ENCODE measurements at regions of chr16 and their contacts with region 1.

Region 1: DNA sequence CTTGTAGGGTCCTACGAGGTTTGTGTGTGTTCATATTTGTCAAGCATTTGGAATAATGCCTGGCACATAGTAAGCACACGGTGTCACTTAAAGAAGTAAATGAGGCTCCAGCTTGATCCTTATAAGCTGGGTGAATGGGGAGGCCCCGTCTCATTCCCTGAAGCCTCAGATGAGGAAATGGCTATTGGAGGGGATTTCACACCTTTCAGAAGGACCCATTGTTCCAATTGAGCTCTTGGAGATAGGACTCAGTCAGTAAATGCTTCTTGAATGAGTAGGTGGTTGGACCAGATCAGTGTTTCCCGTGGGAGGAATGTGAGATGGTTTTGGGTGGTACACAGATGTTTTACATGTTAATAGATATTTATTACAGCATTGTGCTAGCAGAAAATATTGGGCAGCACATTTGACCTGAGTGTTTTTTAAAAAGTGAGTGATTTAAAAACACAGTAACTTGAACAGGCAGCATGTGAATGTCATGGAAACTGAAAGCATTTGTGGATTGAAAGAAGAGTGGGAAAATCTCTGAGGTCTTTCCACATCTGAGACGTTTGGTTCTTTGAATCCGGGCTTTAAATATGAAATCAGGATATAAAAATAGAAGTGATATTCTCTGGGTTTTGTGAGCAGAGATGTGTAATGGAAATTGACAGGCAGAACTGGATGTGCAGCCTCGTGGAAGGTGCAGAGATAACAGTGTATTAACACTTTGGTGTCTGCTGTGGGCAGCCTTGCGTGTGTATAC is 36.4 kb upstream of the ARHGAP17 start:
- DNase-seq: no peak
- H3K4me3 ChIP-seq: no peak overlapping the region
- H3K27ac ChIP-seq: no peak overlapping the region
- H3K4me1 ChIP-seq: peaks cover 50% of the 10 kb centered on the region
- CTCF ChIP-seq: no peak

Region 2: DNA sequence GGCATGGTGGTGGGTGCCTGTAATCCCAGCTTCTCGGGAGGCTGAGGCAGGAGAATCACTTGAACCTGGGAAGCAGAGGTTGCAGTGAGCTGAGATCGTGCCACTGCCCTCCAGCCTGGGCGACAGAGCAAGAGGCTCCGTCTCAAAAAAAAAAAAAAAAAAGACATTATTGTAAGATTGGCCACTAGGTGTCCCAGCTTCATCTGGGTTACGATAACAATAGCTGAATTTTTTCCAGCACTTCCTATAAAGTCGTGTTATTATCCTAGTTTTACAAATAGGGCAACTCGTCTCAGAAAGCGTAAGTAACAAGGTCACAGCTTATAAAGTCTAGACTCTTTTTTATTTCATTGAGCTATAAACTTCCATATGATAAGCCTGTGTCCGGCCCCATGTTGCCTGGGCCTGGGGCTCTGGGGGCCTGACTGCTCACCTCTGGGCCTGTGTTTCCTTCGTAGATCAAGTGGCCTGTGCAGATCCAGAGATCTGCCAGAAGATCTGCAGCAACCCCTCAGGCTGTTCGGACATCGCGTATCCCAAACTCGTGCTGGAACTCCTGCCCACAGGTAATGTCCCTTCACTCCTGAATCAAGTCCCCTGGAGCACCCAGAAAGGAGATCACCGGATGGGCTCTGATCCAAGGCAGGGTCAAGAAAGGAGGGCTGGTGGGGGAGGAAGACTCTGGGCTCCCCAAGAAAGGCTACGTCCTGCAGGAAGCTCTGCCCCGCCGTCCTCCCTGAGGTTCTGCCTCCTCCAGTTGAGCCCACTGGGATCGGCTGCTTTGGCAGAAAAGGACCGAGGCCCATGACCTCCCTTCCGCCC is 145.2 kb before region 1 on chr16:
- CTCF ChIA-PET with region 1: no interaction called
- POLR2A ChIA-PET with region 1: no interaction called
- intact Hi-C with region 1: loop called (anchors 10 kb)
- DNase-seq: peak; percentile 41
- H3K4me3 ChIP-seq: no peak overlapping the region
- H3K27ac ChIP-seq: no peak overlapping the region
- H3K4me1 ChIP-seq: no peaks in the 10 kb centered on the region
- CTCF ChIP-seq: peak; percentile 77

Region 3: DNA sequence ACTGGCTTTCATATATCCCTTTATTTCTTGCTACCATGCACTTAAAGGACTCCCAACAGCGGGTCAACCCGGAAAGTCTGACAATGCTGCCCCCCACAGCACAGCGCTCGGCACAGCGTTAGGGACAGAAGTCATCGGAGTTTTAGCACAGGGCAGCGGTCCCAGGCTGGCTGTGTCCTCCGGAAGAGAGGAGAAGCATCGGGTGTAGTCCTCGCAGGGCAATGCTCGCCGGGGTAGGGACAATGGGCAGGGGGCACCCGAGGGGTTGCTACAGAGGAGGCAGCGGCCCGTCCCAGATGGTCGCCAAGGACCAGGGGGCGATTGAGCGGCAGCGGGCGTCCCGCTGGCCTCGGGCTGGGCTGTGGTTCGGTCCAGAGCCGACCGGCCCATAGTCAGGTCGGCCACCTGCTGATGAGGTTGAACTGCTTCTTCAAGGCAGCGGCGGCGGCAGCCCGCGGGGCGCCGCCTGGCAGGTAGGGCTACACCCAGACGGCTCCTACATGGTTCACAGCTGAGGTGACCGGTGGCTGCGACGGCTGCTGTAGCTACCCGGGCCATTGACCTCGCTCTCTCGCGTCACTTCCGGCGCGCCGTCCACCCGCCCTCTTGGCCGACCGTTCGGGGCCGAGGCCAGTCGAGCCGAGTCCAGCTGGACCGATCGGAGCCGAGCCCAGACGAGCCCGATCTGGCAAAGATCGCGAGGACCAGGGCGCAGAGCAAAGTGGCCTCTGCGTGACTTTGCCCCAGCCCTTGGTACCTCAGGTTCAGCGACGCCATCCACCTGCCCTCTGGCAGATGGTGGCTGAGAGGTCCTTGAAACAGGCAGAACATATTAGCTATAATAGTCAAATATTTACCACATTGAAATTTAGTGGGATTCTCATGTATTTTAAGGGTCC is 55.2 kb after region 1 on chr16:
- CTCF ChIA-PET with region 1: no interaction called
- POLR2A ChIA-PET with region 1: interaction called, 3 read pairs
- intact Hi-C with region 1: loop called (anchors 1 kb)
- DNase-seq: no peak
- H3K4me3 ChIP-seq: no peak overlapping the region
- H3K27ac ChIP-seq: no peak overlapping the region
- H3K4me1 ChIP-seq: peaks cover 25% of the 10 kb centered on the region
- CTCF ChIP-seq: peak; percentile 41

Region 4: DNA sequence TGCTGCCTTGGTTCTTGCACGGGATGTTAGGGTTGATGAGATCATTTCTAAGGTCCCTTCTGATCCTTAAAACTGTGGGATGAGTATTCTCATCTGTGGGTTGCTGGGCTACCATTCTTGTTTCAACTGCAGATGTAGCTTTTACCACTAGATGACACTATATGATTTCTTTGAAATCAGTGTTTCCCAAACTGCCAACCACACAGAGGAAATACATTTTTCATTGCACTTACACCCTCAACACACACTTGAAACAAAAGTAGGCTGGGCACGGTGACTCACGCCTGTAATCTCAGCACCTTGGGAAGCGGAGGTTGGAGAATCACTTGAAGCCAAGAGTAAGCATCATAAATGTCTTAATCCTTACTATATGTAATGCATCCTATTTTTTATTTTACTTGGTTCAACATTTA is 75.2 kb after region 1 on chr16:
- CTCF ChIA-PET with region 1: no interaction called
- POLR2A ChIA-PET with region 1: no interaction called
- intact Hi-C with region 1: loop called (anchors 1 kb)
- DNase-seq: peak; percentile 35
- H3K4me3 ChIP-seq: no peak overlapping the region
- H3K27ac ChIP-seq: no peak overlapping the region
- H3K4me1 ChIP-seq: no peaks in the 10 kb centered on the region
- CTCF ChIP-seq: peak; percentile 82

Region 5: GRCh38 chr16:25224731-25225319 is 173.2 kb after region 1 on chr16:
- CTCF ChIA-PET with region 1: interaction called, 3 read pairs
- POLR2A ChIA-PET with region 1: no interaction called
- intact Hi-C with region 1: loop called (anchors 1 kb)
- DNase-seq: no peak
- H3K4me3 ChIP-seq: no peak overlapping the region
- H3K27ac ChIP-seq: no peak overlapping the region
- H3K4me1 ChIP-seq: no peaks in the 10 kb centered on the region
- CTCF ChIP-seq: no peak